ENCODE measurements at regions of chr3 and their contacts with region 1.

Region 1: DNA sequence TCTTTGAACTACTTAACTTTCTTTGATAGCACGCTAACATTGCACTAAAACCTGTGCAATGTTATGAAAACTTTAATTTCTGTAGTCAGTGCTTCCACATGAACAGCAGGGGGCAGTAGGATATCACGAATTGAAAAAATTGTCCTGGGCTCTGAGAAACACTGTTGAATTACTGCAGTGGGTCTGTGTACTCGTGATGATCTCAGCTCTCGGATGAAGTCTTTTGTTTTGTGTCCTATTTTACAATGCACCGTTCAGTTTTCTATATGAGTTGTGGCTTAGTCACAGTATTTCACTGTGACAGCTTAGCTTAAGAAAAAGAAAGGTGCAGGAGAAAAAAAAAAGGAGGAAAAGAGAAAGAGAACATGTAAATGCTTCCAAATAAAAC is 141.3 kb upstream of the CCDC54 start:
- DNase-seq: peak; percentile 89
- ATAC-seq: peak; percentile 77
- H3K4me3 ChIP-seq: peak overlapping the region; percentile 40
- H3K27ac ChIP-seq: peak overlapping the region; percentile 19; the same call in 1 of the 2 replicates
- H3K4me1 ChIP-seq: peaks cover 5% of the 10 kb centered on the region
- H3K27me3 ChIP-seq: no peaks in the 10 kb centered on the region
- CTCF ChIP-seq: peak; percentile 94
- POLR2A ChIP-seq: no peak
- RAD21 ChIP-seq: peak; percentile 92

Region 2: GRCh38 chr3:107315141-107315540 is 79.2 kb after region 1 on chr3:
- CTCF ChIA-PET with region 1: no interaction called
- POLR2A ChIA-PET with region 1: no interaction called
- dilution Hi-C with region 1: no loop called
- in situ Hi-C with region 1: no loop called
- intact Hi-C with region 1: no loop called
- DNase-seq: peak; percentile 5
- ATAC-seq: peak; percentile 27; the same call in 1 of the 2 replicates
- H3K4me3 ChIP-seq: no peak overlapping the region
- H3K27ac ChIP-seq: no peak overlapping the region
- H3K4me1 ChIP-seq: no peaks in the 10 kb centered on the region
- H3K27me3 ChIP-seq: peaks cover 8% of the 10 kb centered on the region
- CTCF ChIP-seq: no peak
- POLR2A ChIP-seq: no peak
- RAD21 ChIP-seq: no peak

Region 3: DNA sequence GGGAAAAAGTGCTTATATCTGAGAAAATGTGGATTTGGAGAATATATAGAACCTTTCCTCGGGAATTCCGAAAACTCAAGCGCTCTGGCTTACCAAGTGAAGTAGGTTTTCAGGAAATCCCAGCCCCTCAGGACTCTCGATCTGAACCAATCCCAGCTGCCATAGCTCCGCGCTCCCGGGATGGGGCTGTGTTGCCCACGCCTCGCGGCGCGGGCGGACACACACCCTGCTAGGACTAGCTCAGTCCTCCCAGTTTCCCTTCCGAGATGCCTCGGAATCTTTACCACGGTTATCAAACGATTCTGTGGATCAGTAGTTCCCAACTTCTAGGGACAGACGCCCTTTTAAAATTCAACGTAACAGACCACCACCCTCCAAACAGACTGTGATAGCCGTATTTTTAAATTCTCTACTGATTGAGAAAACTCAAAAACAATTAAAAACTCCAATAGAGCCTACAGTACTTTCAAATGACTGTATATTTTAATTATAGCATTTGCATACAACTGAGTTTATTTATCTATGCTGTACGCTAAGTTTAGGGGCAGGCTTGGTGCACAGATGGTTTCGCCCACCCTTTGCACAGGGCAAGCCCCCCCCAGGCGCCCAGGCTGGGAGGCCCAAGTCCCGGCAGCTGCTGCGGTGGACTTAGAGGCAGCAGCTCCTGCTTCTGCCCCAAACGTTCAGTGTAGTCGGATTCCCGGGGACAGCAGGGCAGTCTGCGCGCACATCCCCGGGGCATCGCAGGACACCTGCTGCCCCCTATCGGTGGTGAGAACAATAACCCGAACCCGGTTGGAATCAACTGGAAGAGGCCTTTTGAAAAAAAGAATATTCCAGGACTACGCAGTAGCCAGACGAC is 193.6 kb after region 1 on chr3:
- CTCF ChIA-PET with region 1: interaction called, 8 read pairs
- POLR2A ChIA-PET with region 1: no interaction called
- dilution Hi-C with region 1: no loop called
- in situ Hi-C with region 1: no loop called
- intact Hi-C with region 1: loop called (anchors 1 kb)
- DNase-seq: peak; percentile 87
- ATAC-seq: peak; percentile 83
- H3K4me3 ChIP-seq: peak overlapping the region; percentile 43
- H3K27ac ChIP-seq: no peak overlapping the region
- H3K4me1 ChIP-seq: peaks cover 2% of the 10 kb centered on the region; the same call in 1 of the 2 replicates
- H3K27me3 ChIP-seq: no peaks in the 10 kb centered on the region
- CTCF ChIP-seq: peak; percentile 93
- POLR2A ChIP-seq: no peak
- RAD21 ChIP-seq: peak; percentile 80

Region 4: GRCh38 chr3:107660306-107660976 is 424.5 kb after region 1 on chr3:
- CTCF ChIA-PET with region 1: interaction called, 4 read pairs
- POLR2A ChIA-PET with region 1: no interaction called
- dilution Hi-C with region 1: no loop called
- in situ Hi-C with region 1: no loop called
- intact Hi-C with region 1: loop called (anchors 5 kb)
- DNase-seq: peak; percentile 77
- ATAC-seq: peak; percentile 41
- H3K4me3 ChIP-seq: no peak overlapping the region
- H3K27ac ChIP-seq: peak overlapping the region; percentile 31; the same call in 1 of the 2 replicates
- H3K4me1 ChIP-seq: peaks cover 5% of the 10 kb centered on the region
- H3K27me3 ChIP-seq: no peaks in the 10 kb centered on the region
- CTCF ChIP-seq: peak; percentile 75
- POLR2A ChIP-seq: no peak
- RAD21 ChIP-seq: peak; percentile 59

Region 5: GRCh38 chr3:107846279-107846852 is 610.4 kb after region 1 on chr3:
- CTCF ChIA-PET with region 1: no interaction called
- POLR2A ChIA-PET with region 1: no interaction called
- dilution Hi-C with region 1: no loop called
- in situ Hi-C with region 1: no loop called
- intact Hi-C with region 1: loop called (anchors 5 kb)
- DNase-seq: peak; percentile 64
- ATAC-seq: peak; percentile 87
- H3K4me3 ChIP-seq: no peak overlapping the region
- H3K27ac ChIP-seq: no peak overlapping the region
- H3K4me1 ChIP-seq: peaks cover 2% of the 10 kb centered on the region; the same call in 1 of the 2 replicates
- H3K27me3 ChIP-seq: no peaks in the 10 kb centered on the region
- CTCF ChIP-seq: peak; percentile 70
- POLR2A ChIP-seq: no peak
- RAD21 ChIP-seq: peak; percentile 66

Region 6: GRCh38 chr3:108090701-108091451 is 855.0 kb after region 1 on chr3 and contains the start of gene CD47:
- CTCF ChIA-PET with region 1: no interaction called
- POLR2A ChIA-PET with region 1: no interaction called
- dilution Hi-C with region 1: no loop called
- in situ Hi-C with region 1: no loop called
- intact Hi-C with region 1: loop called (anchors 5 kb)
- DNase-seq: peak; percentile 87
- ATAC-seq: peak; percentile 92
- H3K4me3 ChIP-seq: peak within 1 kb of the TSS; percentile 99
- H3K27ac ChIP-seq: peak within 1 kb of the TSS; percentile 95
- H3K4me1 ChIP-seq: peaks cover 3% of the 10 kb centered on the region; the same call in 1 of the 2 replicates
- H3K27me3 ChIP-seq: no peaks in the 10 kb centered on the region
- CTCF ChIP-seq: no peak
- POLR2A ChIP-seq: peak; percentile 84
- RAD21 ChIP-seq: no peak
- total RNA-seq, gene CD47: 52.0 and 110 TPM in 2 replicates

Region 7: GRCh38 chr3:108477511-108478147 is 1241.7 kb after region 1 on chr3:
- CTCF ChIA-PET with region 1: interaction called, 3 read pairs
- POLR2A ChIA-PET with region 1: no interaction called
- dilution Hi-C with region 1: no loop called
- in situ Hi-C with region 1: no loop called
- intact Hi-C with region 1: loop called (anchors 1 kb)
- DNase-seq: peak; percentile 72
- ATAC-seq: peak; percentile 76
- H3K4me3 ChIP-seq: no peak overlapping the region
- H3K27ac ChIP-seq: no peak overlapping the region
- H3K4me1 ChIP-seq: 0 out of 2 replicates have a peak, but pooled peaks cover 2% of the 10 kb centered on the region
- H3K27me3 ChIP-seq: no peaks in the 10 kb centered on the region
- CTCF ChIP-seq: peak; percentile 73
- POLR2A ChIP-seq: no peak
- RAD21 ChIP-seq: peak; percentile 83

Measured in IMR-90 (cell line).